Activated CD4-positive, alpha-beta T cell treated with anti-CD3 and anti-CD28 coated beads, Interleukin-2, amount 10 ng/mL, durations not matched to agents 24 days and 14 days (primary cell): ENCODE measurements at regions of chr1 and their contacts with region 1.

Region 1: GRCh38 chr1:172745014-172745413 is 86.1 kb downstream of the FASLG start:
- DNase-seq: peak; percentile 86
- H3K4me3 Mint-ChIP-seq: peak overlapping the region; percentile 1
- H3K27ac Mint-ChIP-seq: no peak overlapping the region
- H3K4me1 Mint-ChIP-seq: peaks cover 33% of the 10 kb centered on the region
- H3K27me3 Mint-ChIP-seq: peaks cover 47% of the 10 kb centered on the region

Region 2: DNA sequence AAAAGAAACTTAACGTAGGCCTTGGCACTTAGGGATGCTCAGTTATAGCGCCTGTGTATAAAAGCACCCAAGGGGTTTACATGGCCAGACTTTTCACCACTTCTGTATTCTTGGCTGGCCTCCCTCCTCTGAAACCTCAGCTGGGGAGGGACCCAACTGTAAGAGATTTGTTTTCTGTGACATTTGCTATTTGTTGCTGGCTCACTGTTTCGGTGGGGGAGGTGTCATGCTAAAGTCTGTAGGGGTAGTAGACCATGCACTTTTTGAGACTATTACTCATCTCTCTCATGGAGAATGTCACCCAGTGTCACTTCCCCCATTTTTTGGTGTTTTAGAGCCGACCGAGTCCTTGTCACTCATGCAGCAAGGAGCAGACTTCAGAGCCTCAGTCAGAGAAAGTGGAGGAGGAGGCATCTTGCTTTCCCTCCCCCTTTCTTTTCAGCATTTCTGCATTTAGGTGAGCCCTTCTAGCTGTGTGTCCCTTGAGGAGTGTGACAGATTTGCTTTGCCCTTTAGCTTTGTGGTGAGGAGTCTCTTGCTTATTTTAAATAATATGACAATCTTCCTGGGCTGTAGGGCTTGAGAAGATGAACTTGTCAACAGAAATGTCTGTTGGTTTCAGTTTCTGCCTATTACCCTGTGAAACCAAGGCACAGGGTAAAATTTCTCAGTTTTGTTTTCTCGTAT is 74.0 kb after region 1 on chr1:
- intact Hi-C with region 1: loop called (anchors 1 kb)
- DNase-seq: peak; percentile 80
- H3K4me3 Mint-ChIP-seq: peak overlapping the region; percentile 77
- H3K27ac Mint-ChIP-seq: peak overlapping the region; percentile 82
- H3K4me1 Mint-ChIP-seq: peaks cover 41% of the 10 kb centered on the region
- H3K27me3 Mint-ChIP-seq: peaks cover 14% of the 10 kb centered on the region

Region 3: GRCh38 chr1:172883107-172883791 is 138.2 kb after region 1 on chr1:
- intact Hi-C with region 1: loop called (anchors 2 kb)
- DNase-seq: peak; percentile 58
- H3K4me3 Mint-ChIP-seq: peak overlapping the region; percentile 26
- H3K27ac Mint-ChIP-seq: peak overlapping the region; percentile 43
- H3K4me1 Mint-ChIP-seq: peaks cover 15% of the 10 kb centered on the region
- H3K27me3 Mint-ChIP-seq: peaks cover 71% of the 10 kb centered on the region

Region 4: GRCh38 chr1:173202430-173203145 is 457.6 kb after region 1 on chr1:
- intact Hi-C with region 1: loop called (anchors 1 kb)
- DNase-seq: peak; percentile 67
- H3K4me3 Mint-ChIP-seq: no peak overlapping the region
- H3K27ac Mint-ChIP-seq: no peak overlapping the region
- H3K4me1 Mint-ChIP-seq: peaks cover 32% of the 10 kb centered on the region
- H3K27me3 Mint-ChIP-seq: peaks cover 32% of the 10 kb centered on the region

Region 5: DNA sequence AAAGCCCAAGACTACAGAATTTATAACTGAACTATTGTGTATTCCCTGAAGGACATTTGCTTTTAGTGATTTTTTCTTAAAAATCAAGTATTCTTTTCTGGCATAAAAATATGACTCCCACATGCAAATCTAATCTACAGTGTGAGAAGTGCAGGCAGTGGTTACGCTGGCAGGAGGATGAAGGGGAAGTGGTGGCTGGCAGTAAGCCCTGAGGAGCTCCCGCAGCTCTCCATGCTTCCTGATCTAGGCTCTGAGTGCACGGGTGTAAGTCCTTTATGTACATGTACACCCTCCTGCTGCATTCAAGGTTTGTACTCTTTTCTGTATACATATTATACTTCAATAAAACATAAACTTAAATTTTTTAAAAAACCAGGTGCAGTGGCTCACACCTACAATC is 664.6 kb after region 1 on chr1:
- intact Hi-C with region 1: loop called (anchors 5 kb)
- DNase-seq: no peak
- H3K4me3 Mint-ChIP-seq: no peak overlapping the region
- H3K27ac Mint-ChIP-seq: no peak overlapping the region
- H3K4me1 Mint-ChIP-seq: peaks cover 13% of the 10 kb centered on the region
- H3K27me3 Mint-ChIP-seq: no peaks in the 10 kb centered on the region

Region 6: GRCh38 chr1:173824331-173825081 is 1079.5 kb after region 1 on chr1 and contains the starts of genes CENPL and DARS2:
- intact Hi-C with region 1: loop called (anchors 1 kb)
- DNase-seq: peak; percentile 97
- H3K4me3 Mint-ChIP-seq: peak within 1 kb of the TSS; percentile 99
- H3K27ac Mint-ChIP-seq: peak within 1 kb of the TSS; percentile 98
- H3K4me1 Mint-ChIP-seq: peaks cover 49% of the 10 kb centered on the region
- H3K27me3 Mint-ChIP-seq: no peaks in the 10 kb centered on the region
- total RNA-seq, gene CENPL: 23.2 and 24.4 TPM in 2 replicates
- total RNA-seq, gene DARS2: 47.6 and 52.2 TPM in 2 replicates